Left lung (tissue), 14 donors: ENCODE measurements at regions of chr18 and their contacts with region 1.

Region 1: GRCh38 chr18:47100214-47100831 is 50.0 kb downstream of the HDHD2 start:
- DNase-seq: peak in 3 of 4 donors; percentile 33 to 52 (median 36)
- ATAC-seq: peak; percentile 89
- H3K4me3 ChIP-seq: no peak overlapping the region
- H3K27ac ChIP-seq: no peak overlapping the region
- H3K4me1 ChIP-seq: no peaks in the 10 kb centered on the region
- H3K27me3 ChIP-seq: no peaks in the 10 kb centered on the region
- CTCF ChIP-seq: peak; percentile 61 to 62

Region 2: DNA sequence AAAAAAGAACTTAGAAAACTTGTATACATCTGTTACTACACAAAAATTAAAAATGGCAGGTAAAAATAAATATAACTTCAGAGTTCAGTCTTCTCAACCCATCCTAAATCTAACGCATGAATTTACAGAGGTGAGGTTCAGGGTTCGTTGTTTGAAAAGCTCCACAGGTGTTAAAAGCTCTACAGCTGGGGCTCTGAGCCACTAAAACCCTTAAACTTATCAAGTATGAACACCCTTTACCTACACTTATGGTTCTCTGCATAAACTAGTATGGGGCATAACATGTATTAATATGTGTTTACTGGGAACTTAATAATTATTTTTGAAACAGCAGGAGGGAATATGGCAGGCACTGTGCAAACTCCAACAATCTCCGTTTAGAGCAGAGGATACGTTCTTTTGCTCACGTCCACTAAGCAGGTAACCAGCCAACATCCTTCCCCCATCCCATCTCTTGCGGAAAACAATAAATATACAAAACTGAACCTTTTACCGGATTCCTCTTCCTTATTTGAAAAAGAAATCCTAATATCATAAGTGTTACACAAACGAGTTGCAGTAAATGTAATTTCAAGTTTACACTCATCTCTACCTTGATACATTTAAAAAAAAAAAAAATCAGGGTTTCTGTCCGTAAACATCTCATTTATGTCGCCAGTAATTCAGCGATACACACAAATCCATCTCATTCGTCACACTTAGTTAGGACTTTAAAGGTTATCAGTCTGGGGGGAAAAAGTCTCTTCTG is 184.3 kb before region 1 on chr18:
- intact Hi-C with region 1: no loop called
- DNase-seq: no peak
- ATAC-seq: no peak
- H3K4me3 ChIP-seq: peak overlapping the region; percentile 61 to 64
- H3K27ac ChIP-seq: no peak overlapping the region
- H3K4me1 ChIP-seq: peaks cover 13 to 22% of the 10 kb centered on the region in 2 donors
- H3K27me3 ChIP-seq: no peaks in the 10 kb centered on the region
- CTCF ChIP-seq: no peak

Region 3: GRCh38 chr18:47204908-47205522 is 104.7 kb after region 1 on chr18:
- intact Hi-C with region 1: loop called in 1 of 2 experiments (anchors 5 kb)
- DNase-seq: peak in 1 of 4 donors; percentile 39
- ATAC-seq: peak; percentile 78
- H3K4me3 ChIP-seq: no peak overlapping the region
- H3K27ac ChIP-seq: no peak overlapping the region
- H3K4me1 ChIP-seq: no peaks in the 10 kb centered on the region
- H3K27me3 ChIP-seq: peaks cover 0 to 18% of the 10 kb centered on the region in 2 donors
- CTCF ChIP-seq: peak; percentile 59 to 75